B cell (primary cell): ENCODE measurements at regions of chr6 and their contacts with region 1.

Region 1: DNA sequence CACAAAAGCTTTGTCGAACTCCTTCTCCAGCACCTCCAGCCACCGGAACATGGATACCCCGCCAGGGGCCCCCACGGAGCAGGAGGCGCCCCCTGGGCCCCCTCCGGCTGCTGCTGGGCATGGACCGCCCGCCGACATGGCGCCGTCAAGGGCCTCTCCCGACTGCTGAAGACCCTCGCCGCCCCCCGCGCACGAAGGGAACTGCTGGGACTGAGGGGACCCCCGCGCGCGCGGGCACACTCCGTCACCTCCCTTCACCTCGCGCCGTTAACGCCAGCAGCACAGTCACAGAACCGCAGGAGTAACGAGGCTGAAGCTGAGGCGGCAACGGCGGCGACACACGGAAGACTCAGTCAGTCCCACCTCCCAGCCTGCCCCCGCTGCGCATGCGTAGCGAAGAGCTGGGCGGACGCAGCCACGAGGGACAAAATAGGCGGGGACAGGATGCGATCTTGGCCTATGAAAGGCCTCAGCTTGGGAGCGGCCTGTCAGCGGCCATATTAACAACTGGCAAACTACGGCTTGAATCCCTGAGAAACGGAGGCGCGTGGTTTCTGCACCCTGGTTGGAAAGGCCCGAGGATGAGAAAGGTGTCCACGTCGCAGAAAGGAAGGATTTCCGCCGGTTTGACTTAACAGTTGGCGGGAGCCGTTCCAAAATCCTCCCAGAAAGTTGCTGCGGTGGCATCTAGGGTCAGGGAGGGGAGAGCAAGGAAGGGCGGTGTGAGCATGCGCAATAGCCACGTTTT is at the start of gene GOPC:
- DNase-seq: peak; percentile 98
- ATAC-seq: peak; percentile 95
- H3K4me3 ChIP-seq: peak within 1 kb of the TSS; percentile 86 to 96 (median 91)
- H3K4me3 Mint-ChIP-seq: peak within 1 kb of the TSS; percentile 100
- H3K27ac ChIP-seq: peak within 1 kb of the TSS; percentile 70 to 80
- H3K27ac Mint-ChIP-seq: peak within 1 kb of the TSS; percentile 97
- H3K4me1 ChIP-seq: peaks cover 20 to 25% of the 10 kb centered on the region in 2 donors
- H3K4me1 Mint-ChIP-seq: peaks cover 45% of the 10 kb centered on the region
- H3K27me3 ChIP-seq: no peaks in the 10 kb centered on the region
- H3K27me3 Mint-ChIP-seq: peaks cover 3% of the 10 kb centered on the region
- CTCF ChIP-seq: peak; percentile 35
- total RNA-seq, gene GOPC: 25.0 and 26.7 TPM in 2 replicates

Region 2: GRCh38 chr6:116680975-116681808 is 921.1 kb before region 1 on chr6 and contains the start of gene KPNA5:
- CTCF ChIA-PET with region 1: no interaction called
- POLR2A ChIA-PET with region 1: no interaction called
- intact Hi-C with region 1: loop called (anchors 2 kb)
- DNase-seq: peak; percentile 95
- ATAC-seq: peak; percentile 93
- H3K4me3 ChIP-seq: peak within 1 kb of the TSS; percentile 69 to 89 (median 84)
- H3K4me3 Mint-ChIP-seq: peak within 1 kb of the TSS; percentile 99
- H3K27ac ChIP-seq: peak within 1 kb of the TSS; percentile 83 to 88
- H3K27ac Mint-ChIP-seq: peak within 1 kb of the TSS; percentile 99
- H3K4me1 ChIP-seq: peaks cover 9 to 20% of the 10 kb centered on the region in 2 donors
- H3K4me1 Mint-ChIP-seq: peaks cover 45% of the 10 kb centered on the region
- H3K27me3 ChIP-seq: no peaks in the 10 kb centered on the region
- H3K27me3 Mint-ChIP-seq: no peaks in the 10 kb centered on the region
- CTCF ChIP-seq: no peak
- total RNA-seq, gene KPNA5: 41.7 and 42.9 TPM in 2 replicates

Region 3: GRCh38 chr6:117449549-117450439 is 152.5 kb before region 1 on chr6:
- CTCF ChIA-PET with region 1: interaction called, 64 read pairs
- POLR2A ChIA-PET with region 1: no interaction called
- intact Hi-C with region 1: loop called (anchors 1 kb)
- DNase-seq: peak; percentile 63
- ATAC-seq: no peak
- H3K4me3 ChIP-seq: no peak overlapping the region
- H3K4me3 Mint-ChIP-seq: no peak overlapping the region
- H3K27ac ChIP-seq: no peak overlapping the region
- H3K27ac Mint-ChIP-seq: no peak overlapping the region
- H3K4me1 ChIP-seq: no peaks in the 10 kb centered on the region
- H3K4me1 Mint-ChIP-seq: no peaks in the 10 kb centered on the region
- H3K27me3 ChIP-seq: peaks cover 0 to 13% (median 5%) of the 10 kb centered on the region in 4 experiments
- H3K27me3 Mint-ChIP-seq: peaks cover 33% of the 10 kb centered on the region
- CTCF ChIP-seq: peak; percentile 79

Region 4: GRCh38 chr6:117555882-117556498 is 46.3 kb before region 1 on chr6:
- CTCF ChIA-PET with region 1: interaction called, 12 read pairs
- POLR2A ChIA-PET with region 1: no interaction called
- intact Hi-C with region 1: loop called (anchors 2 kb)
- DNase-seq: peak; percentile 56
- ATAC-seq: no peak
- H3K4me3 ChIP-seq: no peak overlapping the region
- H3K4me3 Mint-ChIP-seq: no peak overlapping the region
- H3K27ac ChIP-seq: no peak overlapping the region
- H3K27ac Mint-ChIP-seq: no peak overlapping the region
- H3K4me1 ChIP-seq: peaks cover 0 to 5% of the 10 kb centered on the region in 2 donors
- H3K4me1 Mint-ChIP-seq: peaks cover 3% of the 10 kb centered on the region
- H3K27me3 ChIP-seq: no peaks in the 10 kb centered on the region
- H3K27me3 Mint-ChIP-seq: peaks cover 5% of the 10 kb centered on the region
- CTCF ChIP-seq: peak; percentile 99

Region 5: DNA sequence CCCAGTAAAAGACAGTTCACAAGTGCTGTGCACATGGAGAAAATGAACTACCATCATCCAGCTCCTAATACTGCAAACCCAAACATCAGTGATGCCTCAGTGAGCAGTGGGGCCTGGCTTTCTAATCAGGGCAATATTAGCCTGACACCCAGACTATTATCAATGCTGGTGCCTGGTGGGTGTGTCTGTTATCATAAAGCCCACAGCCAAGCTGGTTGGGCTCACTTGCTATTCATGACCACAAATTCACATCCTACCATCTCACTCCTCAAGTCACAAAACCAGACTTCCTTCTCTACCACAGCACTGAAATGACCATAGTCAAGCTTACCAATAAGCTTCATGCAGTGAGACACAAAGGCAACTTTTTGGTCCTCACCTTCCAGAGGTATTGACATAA is 765.0 kb after region 1 on chr6:
- CTCF ChIA-PET with region 1: no interaction called
- POLR2A ChIA-PET with region 1: no interaction called
- intact Hi-C with region 1: no loop called
- DNase-seq: no peak
- ATAC-seq: no peak
- H3K4me3 ChIP-seq: no peak overlapping the region
- H3K4me3 Mint-ChIP-seq: no peak overlapping the region
- H3K27ac ChIP-seq: no peak overlapping the region
- H3K27ac Mint-ChIP-seq: no peak overlapping the region
- H3K4me1 ChIP-seq: no peaks in the 10 kb centered on the region
- H3K4me1 Mint-ChIP-seq: no peaks in the 10 kb centered on the region
- H3K27me3 ChIP-seq: no peaks in the 10 kb centered on the region
- H3K27me3 Mint-ChIP-seq: no peaks in the 10 kb centered on the region
- CTCF ChIP-seq: no peak

Region 6: GRCh38 chr6:118934461-118935330 is 1332.4 kb after region 1 on chr6 and contains the start of gene MCM9:
- CTCF ChIA-PET with region 1: no interaction called
- POLR2A ChIA-PET with region 1: no interaction called
- intact Hi-C with region 1: loop called (anchors 2 kb)
- DNase-seq: peak; percentile 93
- ATAC-seq: peak; percentile 89
- H3K4me3 ChIP-seq: peak within 1 kb of the TSS; percentile 91 to 99 (median 94)
- H3K4me3 Mint-ChIP-seq: peak within 1 kb of the TSS; percentile 92
- H3K27ac ChIP-seq: peak within 1 kb of the TSS; percentile 83 to 90
- H3K27ac Mint-ChIP-seq: peak within 1 kb of the TSS; percentile 92
- H3K4me1 ChIP-seq: peaks cover 10 to 18% of the 10 kb centered on the region in 2 donors
- H3K4me1 Mint-ChIP-seq: peaks cover 35% of the 10 kb centered on the region
- H3K27me3 ChIP-seq: no peaks in the 10 kb centered on the region
- H3K27me3 Mint-ChIP-seq: no peaks in the 10 kb centered on the region
- CTCF ChIP-seq: no peak
- total RNA-seq, gene MCM9: 51.0 and 54.5 TPM in 2 replicates